ENCODE measurements at regions of chr1 and their contacts with region 1.

Region 1: GRCh38 chr1:32151319-32151787 is 28.1 kb upstream of the TXLNA start:
- DNase-seq: no peak
- ATAC-seq: no peak
- H3K4me3 Mint-ChIP-seq: no peak overlapping the region
- H3K27ac Mint-ChIP-seq: peak overlapping the region; percentile 82
- H3K4me1 Mint-ChIP-seq: peaks cover 3% of the 10 kb centered on the region; the same call in 1 of the 2 replicates
- H3K27me3 Mint-ChIP-seq: no peaks in the 10 kb centered on the region
- CTCF ChIP-seq: no peak

Region 2: GRCh38 chr1:32031578-32032274 is 119.6 kb before region 1 on chr1:
- CTCF ChIA-PET with region 1: no interaction called
- POLR2A ChIA-PET with region 1: no interaction called
- DNase-seq: no peak
- ATAC-seq: no peak
- H3K4me3 Mint-ChIP-seq: no peak overlapping the region
- H3K27ac Mint-ChIP-seq: peak overlapping the region; percentile 11; the same call in 1 of the 2 replicates
- H3K4me1 Mint-ChIP-seq: no peaks in the 10 kb centered on the region
- H3K27me3 Mint-ChIP-seq: no peaks in the 10 kb centered on the region
- CTCF ChIP-seq: no peak

Region 3: DNA sequence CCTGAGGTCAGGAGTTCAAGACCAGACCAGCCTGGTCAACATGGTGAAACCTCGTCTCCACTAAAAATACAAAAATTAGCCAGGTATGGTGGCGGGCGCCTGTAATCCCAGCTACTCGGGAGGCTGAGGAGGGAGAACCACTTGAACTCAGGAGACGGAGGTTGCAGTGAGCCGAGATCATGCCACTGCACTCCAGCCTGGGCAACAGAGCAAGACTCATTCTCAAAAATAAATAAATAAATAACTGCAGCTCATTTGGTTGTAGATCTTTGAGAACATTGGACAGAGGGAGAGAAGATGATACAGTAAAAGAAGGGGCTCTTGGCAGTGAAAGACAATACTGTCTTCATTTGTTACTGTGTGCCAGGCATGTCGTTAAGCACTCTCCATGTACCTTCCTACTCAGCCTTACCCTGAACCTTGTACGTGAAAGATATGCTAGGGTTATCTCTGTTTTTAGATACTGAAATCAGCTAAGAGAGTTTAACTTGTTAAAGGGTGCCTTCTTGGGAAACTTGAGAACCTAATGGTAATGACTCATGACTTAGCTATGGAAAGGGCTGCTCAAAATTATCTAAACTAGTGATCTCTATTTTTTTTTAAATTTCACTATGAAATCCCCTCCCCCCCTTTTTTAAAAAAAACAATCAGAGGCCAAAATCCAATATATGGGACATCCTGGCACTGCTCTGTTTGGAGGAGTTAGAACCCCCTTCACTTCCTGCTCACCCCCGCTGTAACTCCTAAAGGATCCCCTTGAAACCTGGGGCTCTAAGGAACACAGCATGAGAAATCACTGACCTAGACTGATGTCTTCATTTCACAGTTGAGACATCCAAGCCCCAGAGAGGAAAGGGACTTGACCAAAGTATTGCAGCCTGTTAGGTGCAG is 50.3 kb before region 1 on chr1:
- CTCF ChIA-PET with region 1: no interaction called
- POLR2A ChIA-PET with region 1: no interaction called
- DNase-seq: no peak
- ATAC-seq: no peak
- H3K4me3 Mint-ChIP-seq: no peak overlapping the region
- H3K27ac Mint-ChIP-seq: no peak overlapping the region
- H3K4me1 Mint-ChIP-seq: no peaks in the 10 kb centered on the region
- H3K27me3 Mint-ChIP-seq: no peaks in the 10 kb centered on the region
- CTCF ChIP-seq: no peak

Region 4: GRCh38 chr1:32138943-32139342 is 12.4 kb before region 1 on chr1:
- CTCF ChIA-PET with region 1: no interaction called
- POLR2A ChIA-PET with region 1: interaction called, 10 read pairs
- DNase-seq: no peak
- ATAC-seq: no peak
- H3K4me3 Mint-ChIP-seq: no peak overlapping the region
- H3K27ac Mint-ChIP-seq: peak overlapping the region; percentile 71
- H3K4me1 Mint-ChIP-seq: no peaks in the 10 kb centered on the region
- H3K27me3 Mint-ChIP-seq: no peaks in the 10 kb centered on the region
- CTCF ChIP-seq: no peak

Region 5: DNA sequence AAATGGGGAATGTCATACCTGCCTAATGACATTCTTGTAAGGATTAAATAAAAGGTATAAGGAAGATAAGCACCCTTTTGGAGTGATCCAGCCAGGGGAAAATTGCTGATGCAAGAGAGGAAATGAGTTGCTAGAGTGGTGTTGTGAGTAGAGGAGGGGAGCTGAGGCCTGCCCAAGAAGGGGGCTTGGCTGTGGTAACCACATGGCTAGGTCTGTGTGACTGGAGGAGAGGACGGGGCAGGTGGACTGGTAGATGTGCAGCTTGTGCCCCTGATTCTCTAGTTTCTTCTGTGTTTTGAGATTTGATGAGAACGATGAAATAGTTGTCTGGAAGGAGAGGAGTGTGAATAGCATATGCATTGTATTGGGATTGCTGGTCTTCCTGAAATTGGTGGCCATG is 34.7 kb after region 1 on chr1:
- CTCF ChIA-PET with region 1: no interaction called
- POLR2A ChIA-PET with region 1: no interaction called
- DNase-seq: no peak
- ATAC-seq: no peak
- H3K4me3 Mint-ChIP-seq: no peak overlapping the region
- H3K27ac Mint-ChIP-seq: peak overlapping the region; percentile 64
- H3K4me1 Mint-ChIP-seq: peaks cover 6% of the 10 kb centered on the region
- H3K27me3 Mint-ChIP-seq: no peaks in the 10 kb centered on the region
- CTCF ChIP-seq: no peak

Measured in WTC11 (cell line).